Mucosa of descending colon (tissue), 3 donors: ENCODE measurements at regions of chr6 and their contacts with region 1.

Region 1: GRCh38 chr6:117555882-117556498 is 46.3 kb downstream of the GOPC start:
- DNase-seq: peak in 1 of 3 donors; percentile 80
- ATAC-seq: no peak
- H3K4me3 ChIP-seq: no peak overlapping the region
- H3K4me1 ChIP-seq: no peaks in the 10 kb centered on the region
- CTCF ChIP-seq: peak; percentile 70

Region 2: GRCh38 chr6:117351521-117351920 is 204.5 kb before region 1 on chr6:
- intact Hi-C with region 1: loop called in 1 of 2 experiments (anchors 2 kb)
- DNase-seq: no peak
- ATAC-seq: no peak
- H3K4me3 ChIP-seq: no peak overlapping the region
- H3K4me1 ChIP-seq: no peaks in the 10 kb centered on the region
- CTCF ChIP-seq: no peak

Region 3: DNA sequence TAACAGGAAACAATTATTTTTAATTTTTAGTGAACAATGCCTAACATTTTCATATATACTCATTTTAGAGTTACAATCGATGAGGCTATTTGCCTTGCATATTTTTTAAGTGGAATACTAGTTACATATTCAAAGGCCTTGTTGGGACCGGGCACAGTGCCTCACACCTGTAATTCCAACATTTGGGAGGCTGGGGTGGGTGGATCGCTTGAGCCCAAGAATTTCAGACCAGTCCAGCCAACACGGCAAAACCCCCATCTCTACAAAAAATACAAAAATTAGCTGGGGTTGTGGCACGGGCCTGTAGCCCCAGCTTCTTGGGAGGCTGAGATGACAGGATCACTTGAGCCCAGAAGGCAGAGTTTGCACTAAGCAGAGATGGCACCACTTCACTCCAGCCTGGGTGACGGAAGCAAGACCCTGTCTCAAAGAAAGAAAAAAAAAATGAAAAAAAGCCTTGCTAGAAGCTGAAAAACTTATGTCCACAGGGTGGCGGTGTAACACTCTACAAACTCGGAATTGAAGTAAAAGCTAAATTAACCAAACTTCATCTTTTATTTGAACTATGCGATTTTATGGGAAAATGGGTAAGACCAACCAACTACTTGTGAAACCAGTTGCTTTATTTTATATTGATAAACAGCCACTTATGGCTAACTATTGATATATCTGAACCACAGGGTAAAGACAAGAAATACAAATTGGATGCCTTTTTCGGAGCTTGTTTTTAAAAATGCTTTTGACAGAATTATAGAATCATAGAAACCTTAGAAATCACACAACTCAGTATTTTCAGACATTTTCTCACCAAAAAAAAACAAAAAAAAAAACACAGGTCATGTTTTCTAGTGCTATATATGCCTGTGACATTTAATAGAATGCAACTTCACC is 106.2 kb before region 1 on chr6:
- intact Hi-C with region 1: loop called (anchors 5 kb)
- DNase-seq: peak in 1 of 3 donors; percentile 90
- ATAC-seq: peak; percentile 22
- H3K4me3 ChIP-seq: no peak overlapping the region
- H3K4me1 ChIP-seq: peaks cover 7% of the 10 kb centered on the region
- CTCF ChIP-seq: peak; percentile 50